Caco-2 (cell line): ENCODE measurements at regions of chr17 and their contacts with region 1.

Region 1: GRCh38 chr17:44543213-44543904 is 13.9 kb upstream of the FZD2 start:
- DNase-seq: peak; percentile 94 to 97
- H3K4me3 ChIP-seq: no peak overlapping the region
- H3K4me3 Mint-ChIP-seq: peak overlapping the region; percentile 45
- H3K27ac Mint-ChIP-seq: peak overlapping the region; percentile 98
- H3K4me1 ChIP-seq: peaks cover 69% of the 10 kb centered on the region
- H3K4me1 Mint-ChIP-seq: peaks cover 50% of the 10 kb centered on the region
- H3K27me3 ChIP-seq: no peaks in the 10 kb centered on the region
- H3K27me3 Mint-ChIP-seq: no peaks in the 10 kb centered on the region
- CTCF ChIP-seq: no peak

Region 2: DNA sequence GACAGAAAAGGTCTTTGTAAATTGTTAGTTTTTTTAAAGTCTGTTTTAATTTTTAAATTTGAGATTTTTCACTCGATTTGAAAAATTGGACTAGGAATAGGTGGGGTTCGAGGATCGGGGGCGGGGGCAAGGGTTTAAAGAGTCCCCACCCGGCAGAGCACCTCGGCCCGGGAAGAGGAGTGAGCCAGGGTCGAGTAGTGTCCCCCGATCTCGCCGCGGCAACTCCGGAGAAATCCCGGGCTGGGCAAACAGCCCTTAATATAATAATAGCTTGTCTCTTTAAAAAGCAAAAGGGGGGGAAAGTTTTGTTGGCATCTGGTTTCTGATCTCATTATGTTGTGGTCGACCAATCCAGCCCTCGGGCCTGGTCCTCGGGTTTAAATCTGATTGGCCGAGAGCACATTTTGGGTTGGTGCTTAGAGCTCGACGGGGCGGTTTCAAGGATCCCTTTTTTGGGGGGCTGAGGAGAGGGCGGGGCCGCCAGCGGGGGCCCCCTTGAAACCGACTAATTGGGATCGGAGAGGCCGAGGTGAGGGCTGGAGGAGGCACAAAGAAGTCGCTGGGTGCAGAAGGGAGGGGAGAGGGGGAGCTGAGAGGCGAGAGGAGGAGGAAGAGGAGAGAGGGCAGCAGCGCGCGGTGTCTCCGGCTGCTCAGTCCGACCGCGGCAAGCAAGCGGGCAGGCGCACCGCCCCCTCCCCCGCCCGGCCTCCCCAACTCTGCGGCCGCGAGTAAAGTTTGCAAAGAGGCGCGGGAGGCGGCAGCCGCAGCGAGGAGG is 13.7 kb after region 1 on chr17 and contains the start of gene FZD2:
- CTCF ChIA-PET with region 1: interaction called, 18 read pairs
- POLR2A ChIA-PET with region 1: interaction called, 46 read pairs
- intact Hi-C with region 1: loop called (anchors 1 kb)
- DNase-seq: peak; percentile 89 to 93
- H3K4me3 ChIP-seq: peak within 1 kb of the TSS; percentile 61
- H3K4me3 Mint-ChIP-seq: peak within 1 kb of the TSS; percentile 93
- H3K27ac Mint-ChIP-seq: peak within 1 kb of the TSS; percentile 97
- H3K4me1 ChIP-seq: peaks cover 52% of the 10 kb centered on the region
- H3K4me1 Mint-ChIP-seq: peaks cover 33% of the 10 kb centered on the region
- H3K27me3 ChIP-seq: no peaks in the 10 kb centered on the region
- H3K27me3 Mint-ChIP-seq: no peaks in the 10 kb centered on the region
- CTCF ChIP-seq: no peak
- total RNA-seq, gene FZD2: 36.4 and 39.5 TPM in 2 replicates

Region 3: DNA sequence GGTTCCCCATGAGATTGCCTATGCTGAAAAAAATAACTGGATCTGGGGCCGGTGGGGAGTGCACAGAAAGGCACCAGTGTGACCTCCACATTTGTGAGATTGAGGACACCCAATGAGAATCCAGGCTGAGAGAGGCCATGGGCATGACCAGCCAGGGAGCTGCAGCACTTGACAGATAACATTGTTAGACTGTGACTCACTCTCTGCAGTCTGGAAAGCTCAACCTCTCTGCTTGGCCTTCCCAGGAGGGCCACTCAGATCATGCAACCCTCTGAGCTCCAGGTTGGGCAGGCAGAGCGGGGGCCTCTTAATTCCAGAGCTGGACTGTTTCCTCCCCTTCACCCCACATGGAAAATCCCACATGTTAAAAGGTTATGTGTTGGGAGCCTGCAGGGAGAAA is 44.0 kb after region 1 on chr17:
- CTCF ChIA-PET with region 1: interaction called, 4 read pairs
- POLR2A ChIA-PET with region 1: interaction called, 9 read pairs
- intact Hi-C with region 1: loop called (anchors 2 kb)
- DNase-seq: peak; percentile 82 to 88
- H3K4me3 ChIP-seq: no peak overlapping the region
- H3K4me3 Mint-ChIP-seq: peak overlapping the region; percentile 43
- H3K27ac Mint-ChIP-seq: peak overlapping the region; percentile 84
- H3K4me1 ChIP-seq: peaks cover 33% of the 10 kb centered on the region
- H3K4me1 Mint-ChIP-seq: peaks cover 33% of the 10 kb centered on the region
- H3K27me3 ChIP-seq: no peaks in the 10 kb centered on the region
- H3K27me3 Mint-ChIP-seq: no peaks in the 10 kb centered on the region
- CTCF ChIP-seq: no peak

Region 4: DNA sequence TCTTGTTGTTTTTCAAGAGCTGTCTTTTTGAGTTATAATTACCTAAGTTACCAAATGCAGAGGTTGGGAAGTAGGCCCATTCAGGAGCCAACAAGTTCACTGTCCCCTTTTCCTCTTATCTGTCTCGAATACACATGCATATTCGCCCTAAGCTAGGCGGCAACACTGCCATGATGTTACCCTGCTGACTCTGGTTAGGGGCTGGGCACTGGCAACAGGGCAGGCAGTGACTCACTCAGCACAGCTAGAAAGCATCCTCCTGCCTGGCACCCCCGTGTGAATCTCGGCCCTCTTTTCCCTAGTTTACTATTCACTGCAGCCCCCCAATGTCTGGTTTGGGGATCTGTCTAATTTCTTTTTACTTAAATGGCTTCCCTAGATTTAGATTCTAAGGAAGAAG is 178.9 kb after region 1 on chr17:
- CTCF ChIA-PET with region 1: no interaction called
- POLR2A ChIA-PET with region 1: interaction called, 10 read pairs
- intact Hi-C with region 1: no loop called
- DNase-seq: no peak
- H3K4me3 ChIP-seq: no peak overlapping the region
- H3K4me3 Mint-ChIP-seq: no peak overlapping the region
- H3K27ac Mint-ChIP-seq: no peak overlapping the region
- H3K4me1 ChIP-seq: no peaks in the 10 kb centered on the region
- H3K4me1 Mint-ChIP-seq: no peaks in the 10 kb centered on the region
- H3K27me3 ChIP-seq: no peaks in the 10 kb centered on the region
- H3K27me3 Mint-ChIP-seq: no peaks in the 10 kb centered on the region
- CTCF ChIP-seq: no peak